Natural killer cell (primary cell): ENCODE measurements at regions of chr16 and their contacts with region 1.

Region 1: GRCh38 chr16:17194190-17194780 is 276.5 kb downstream of the XYLT1 start:
- DNase-seq: peak; percentile 57 to 79
- ATAC-seq: peak; percentile 71 to 83 (median 72)
- H3K4me3 ChIP-seq: no peak overlapping the region
- H3K4me3 Mint-ChIP-seq: no peak overlapping the region
- H3K27ac ChIP-seq: no peak overlapping the region
- H3K27ac Mint-ChIP-seq: no peak overlapping the region
- H3K4me1 ChIP-seq: peaks cover 6% of the 10 kb centered on the region
- H3K4me1 Mint-ChIP-seq: peaks cover 12 to 13% of the 10 kb centered on the region in 2 donors
- H3K27me3 ChIP-seq: no peaks in the 10 kb centered on the region
- H3K27me3 Mint-ChIP-seq: no peaks in the 10 kb centered on the region
- CTCF ChIP-seq: peak; percentile 87

Region 2: DNA sequence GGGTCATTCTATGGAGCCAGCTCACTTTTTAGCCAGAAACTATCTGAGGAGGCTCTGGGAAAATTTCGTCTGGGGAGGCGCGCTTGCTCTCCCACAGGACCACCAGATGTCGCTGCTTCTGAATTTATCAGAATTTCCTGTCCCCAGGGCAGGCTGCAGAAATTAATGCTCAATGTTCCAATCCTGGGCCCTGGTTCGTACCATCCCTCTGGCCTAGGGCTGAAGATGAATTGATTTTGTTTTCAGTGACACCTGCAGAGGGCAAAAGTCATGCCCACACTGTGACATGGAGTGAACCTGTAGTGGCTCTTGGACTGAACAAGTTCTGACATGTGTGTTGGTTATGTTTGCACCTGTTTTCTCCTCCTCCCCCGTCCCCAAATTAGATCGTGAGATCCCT is 332.7 kb before region 1 on chr16:
- intact Hi-C with region 1: loop called (anchors 10 kb)
- DNase-seq: peak; percentile 30 to 74
- ATAC-seq: peak; percentile 37 to 60 (median 40)
- H3K4me3 ChIP-seq: no peak overlapping the region
- H3K4me3 Mint-ChIP-seq: no peak overlapping the region
- H3K27ac ChIP-seq: no peak overlapping the region
- H3K27ac Mint-ChIP-seq: no peak overlapping the region
- H3K4me1 ChIP-seq: no peaks in the 10 kb centered on the region
- H3K4me1 Mint-ChIP-seq: no peaks in the 10 kb centered on the region
- H3K27me3 ChIP-seq: no peaks in the 10 kb centered on the region
- H3K27me3 Mint-ChIP-seq: peaks cover 7 to 16% of the 10 kb centered on the region in 2 donors
- CTCF ChIP-seq: peak; percentile 66

Region 3: GRCh38 chr16:16908077-16908476 is 286.2 kb before region 1 on chr16:
- intact Hi-C with region 1: no loop called
- DNase-seq: no peak
- ATAC-seq: no peak
- H3K4me3 ChIP-seq: no peak overlapping the region
- H3K4me3 Mint-ChIP-seq: no peak overlapping the region
- H3K27ac ChIP-seq: no peak overlapping the region
- H3K27ac Mint-ChIP-seq: no peak overlapping the region
- H3K4me1 ChIP-seq: no peaks in the 10 kb centered on the region
- H3K4me1 Mint-ChIP-seq: no peaks in the 10 kb centered on the region
- H3K27me3 ChIP-seq: no peaks in the 10 kb centered on the region
- H3K27me3 Mint-ChIP-seq: peaks cover 0 to 16% of the 10 kb centered on the region in 2 donors
- CTCF ChIP-seq: no peak